HAP-1 (cell line): ENCODE measurements at regions of chr2 and their contacts with region 1.

Region 1: DNA sequence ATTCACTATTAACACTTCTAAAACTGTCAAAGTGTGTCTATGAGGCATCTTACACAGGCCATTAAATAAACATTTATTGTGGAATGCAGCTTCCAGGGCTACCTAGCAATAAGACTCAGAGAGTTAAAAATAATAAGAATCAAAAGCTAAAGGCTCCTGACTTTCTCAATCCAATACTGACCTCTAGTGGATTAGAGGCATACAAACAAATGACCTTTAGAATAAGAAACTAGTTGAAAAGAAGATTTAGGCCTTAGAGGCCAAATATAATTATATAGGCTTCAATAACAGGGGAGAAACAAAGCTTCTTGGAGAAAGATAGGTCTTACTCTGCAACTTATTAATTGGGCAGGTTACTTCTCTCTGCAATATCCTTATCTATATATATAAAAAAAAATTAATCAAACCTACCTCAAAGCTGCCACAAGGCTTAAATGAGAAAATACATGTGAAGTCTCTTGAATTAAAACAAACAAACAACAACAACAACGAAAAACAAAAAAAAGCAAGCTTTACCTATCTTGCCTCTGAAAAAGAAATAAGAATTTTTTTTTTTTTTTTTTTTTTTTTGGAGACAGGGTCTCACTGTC is 246.1 kb downstream of the EXOC6B start:
- DNase-seq: peak in 1 of 2 experiments; percentile 77
- H3K4me3 ChIP-seq: no peak overlapping the region
- H3K4me1 ChIP-seq: peaks cover 15% of the 10 kb centered on the region
- H3K27me3 ChIP-seq: no peaks in the 10 kb centered on the region

Region 2: GRCh38 chr2:71933467-71934319 is 646.0 kb before region 1 on chr2:
- in situ Hi-C with region 1: loop called (anchors 25 kb)
- DNase-seq: no peak
- H3K4me3 ChIP-seq: no peak overlapping the region
- H3K4me1 ChIP-seq: no peaks in the 10 kb centered on the region
- H3K27me3 ChIP-seq: no peaks in the 10 kb centered on the region

Region 3: DNA sequence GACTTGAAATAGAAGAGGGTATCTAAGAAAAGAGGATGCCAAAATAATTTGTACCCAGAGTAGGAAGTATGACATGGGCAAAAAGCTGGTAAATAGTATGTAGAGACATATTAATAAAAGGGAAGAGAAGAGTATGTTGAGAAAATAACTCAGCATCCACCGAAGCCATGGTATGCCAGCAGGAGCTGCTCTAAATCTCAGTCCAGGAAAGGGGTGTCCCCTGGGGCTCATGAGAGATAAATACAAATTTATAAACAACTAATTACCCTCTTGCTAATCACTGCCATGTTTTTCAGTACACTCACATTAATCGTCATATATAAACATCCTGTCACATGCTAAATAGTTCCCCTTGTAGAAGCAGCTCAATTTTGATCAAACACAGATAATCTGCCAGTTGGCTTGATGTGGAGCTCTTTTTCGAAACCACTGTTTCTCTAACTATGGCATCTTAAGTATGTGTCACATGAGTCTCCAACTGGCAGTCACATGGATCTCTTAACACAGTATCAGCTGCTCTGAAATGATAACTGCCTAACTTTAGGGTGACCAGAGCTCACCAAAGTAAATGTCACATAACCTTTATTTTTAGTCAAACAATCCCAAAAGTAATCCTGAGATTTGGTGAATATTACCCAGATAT is 214.2 kb after region 1 on chr2:
- in situ Hi-C with region 1: no loop called
- DNase-seq: no peak
- H3K4me3 ChIP-seq: no peak overlapping the region
- H3K4me1 ChIP-seq: no peaks in the 10 kb centered on the region
- H3K27me3 ChIP-seq: no peaks in the 10 kb centered on the region

Region 4: DNA sequence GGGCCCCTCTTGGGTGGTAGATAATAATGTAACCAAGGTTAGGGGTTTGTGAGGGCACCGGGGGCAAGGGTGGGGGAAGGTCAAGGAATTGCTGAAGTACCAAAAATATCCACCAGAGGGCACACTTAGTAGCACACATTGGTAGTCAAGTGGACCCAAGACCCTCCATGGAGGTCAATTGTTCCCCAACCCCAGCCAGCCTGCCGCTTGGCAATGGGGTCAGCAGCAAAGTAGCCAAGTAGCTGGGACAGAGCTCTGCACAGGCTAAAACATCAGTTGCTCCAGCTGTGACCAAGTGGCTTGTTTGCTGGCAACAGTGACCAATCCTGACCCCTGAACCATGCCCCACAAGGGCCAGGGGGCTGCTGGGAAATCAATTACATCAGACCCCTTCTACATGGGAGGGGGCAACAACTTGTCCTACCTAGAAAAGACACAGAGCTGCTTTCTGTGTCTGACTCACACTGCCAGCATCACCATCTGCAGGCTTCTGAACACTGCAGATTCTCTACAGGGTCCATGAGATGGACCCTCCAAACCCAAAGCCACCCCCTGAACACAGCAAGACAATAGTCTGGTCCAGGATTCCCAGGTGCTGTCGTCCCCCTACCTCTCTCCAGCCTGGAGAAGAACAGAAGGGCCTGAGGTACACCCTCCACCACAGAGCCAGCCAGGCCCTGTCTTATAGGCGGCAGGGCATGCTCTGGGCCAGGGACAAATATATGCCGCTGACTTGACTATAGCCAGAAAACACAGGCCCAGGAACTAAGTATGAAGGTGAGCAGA is 413.7 kb after region 1 on chr2:
- in situ Hi-C with region 1: no loop called
- DNase-seq: peak; percentile 18 to 71
- H3K4me3 ChIP-seq: no peak overlapping the region
- H3K4me1 ChIP-seq: no peaks in the 10 kb centered on the region
- H3K27me3 ChIP-seq: no peaks in the 10 kb centered on the region